ENCODE measurements at regions of chr12 and their contacts with region 1.

Region 1: GRCh38 chr12:8989413-8989812 is at the start of gene KLRG1:
- DNase-seq: peak in 1 of 2 donors; percentile 43
- ATAC-seq: peak; percentile 53 to 75 (median 62)
- H3K4me3 ChIP-seq: peak within 1 kb of the TSS; percentile 52
- H3K4me3 Mint-ChIP-seq: peak within 1 kb of the TSS; percentile 94
- H3K27ac ChIP-seq: peak within 1 kb of the TSS; percentile 92
- H3K27ac Mint-ChIP-seq: peak within 1 kb of the TSS; percentile 90 to 96
- H3K4me1 ChIP-seq: peaks cover 45% of the 10 kb centered on the region
- H3K4me1 Mint-ChIP-seq: peaks cover 68 to 71% of the 10 kb centered on the region in 2 donors
- H3K27me3 ChIP-seq: no peaks in the 10 kb centered on the region
- H3K27me3 Mint-ChIP-seq: no peaks in the 10 kb centered on the region
- CTCF ChIP-seq: no peak
- total RNA-seq, gene KLRG1: 76.3 to 165 (median 86.2) TPM

Region 2: GRCh38 chr12:8922543-8922942 is 66.9 kb before region 1 on chr12:
- intact Hi-C with region 1: no loop called
- DNase-seq: no peak
- ATAC-seq: no peak
- H3K4me3 ChIP-seq: no peak overlapping the region
- H3K4me3 Mint-ChIP-seq: no peak overlapping the region
- H3K27ac ChIP-seq: no peak overlapping the region
- H3K27ac Mint-ChIP-seq: peak overlapping the region in 1 of 2 donors; percentile 4
- H3K4me1 ChIP-seq: no peaks in the 10 kb centered on the region
- H3K4me1 Mint-ChIP-seq: no peaks in the 10 kb centered on the region
- H3K27me3 ChIP-seq: no peaks in the 10 kb centered on the region
- H3K27me3 Mint-ChIP-seq: no peaks in the 10 kb centered on the region
- CTCF ChIP-seq: no peak

Region 3: DNA sequence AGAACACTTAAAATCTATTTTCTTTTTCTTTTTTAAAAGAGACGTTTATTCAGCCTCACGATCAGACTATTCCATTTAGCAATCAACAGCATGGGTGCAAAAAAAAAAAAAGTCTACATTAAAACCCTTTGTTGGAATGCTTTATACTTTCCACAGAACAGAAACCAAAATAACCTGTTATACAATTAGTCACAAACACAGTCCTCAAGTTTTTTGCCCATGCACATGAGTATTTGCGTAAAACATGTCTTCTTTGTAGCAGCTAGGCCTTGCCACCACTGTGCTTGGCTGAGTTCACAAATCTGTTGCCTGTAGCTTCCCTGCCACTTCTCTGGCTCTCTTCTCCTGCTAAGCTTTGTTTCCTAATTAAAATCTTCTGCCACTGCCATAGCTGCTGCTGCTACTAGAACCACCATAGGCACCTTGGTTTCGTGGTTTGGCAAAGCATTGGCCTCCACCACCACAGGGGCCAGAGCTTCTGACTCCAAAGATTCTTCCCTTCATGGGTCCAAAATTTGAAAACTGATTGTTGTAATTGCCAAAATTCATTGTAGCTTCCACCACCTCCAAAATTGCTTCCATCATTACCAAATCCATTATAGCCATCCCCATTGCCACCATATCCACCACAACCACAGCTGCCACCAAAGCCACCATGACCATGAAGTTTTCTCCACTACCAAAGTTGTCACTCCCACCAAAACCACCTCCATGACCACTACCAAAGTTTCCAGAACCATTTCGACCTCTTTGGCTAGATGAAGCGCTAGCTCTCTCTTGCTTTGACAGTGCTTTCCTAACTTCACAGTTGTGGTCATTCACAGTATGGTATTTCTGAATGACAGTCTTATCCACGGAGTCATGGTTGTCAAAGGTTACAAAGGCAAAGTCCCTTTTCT is 38.0 kb after region 1 on chr12:
- intact Hi-C with region 1: loop called (anchors 2 kb)
- DNase-seq: peak; percentile 42 to 48
- ATAC-seq: peak in 1 of 3 donors; percentile 33
- H3K4me3 ChIP-seq: no peak overlapping the region
- H3K4me3 Mint-ChIP-seq: peak overlapping the region; percentile 67
- H3K27ac ChIP-seq: peak overlapping the region; percentile 79
- H3K27ac Mint-ChIP-seq: no peak overlapping the region
- H3K4me1 ChIP-seq: peaks cover 78% of the 10 kb centered on the region
- H3K4me1 Mint-ChIP-seq: peaks cover 23 to 38% of the 10 kb centered on the region in 2 donors
- H3K27me3 ChIP-seq: no peaks in the 10 kb centered on the region
- H3K27me3 Mint-ChIP-seq: no peaks in the 10 kb centered on the region
- CTCF ChIP-seq: no peak